ENCODE measurements at regions of chr7 and their contacts with region 1.

Region 1: GRCh38 chr7:118183786-118184564 is at the start of gene LSM8:
- DNase-seq: peak; percentile 94
- ATAC-seq: peak; percentile 95
- H3K4me3 Mint-ChIP-seq: peak within 1 kb of the TSS; percentile 97
- H3K27ac Mint-ChIP-seq: peak within 1 kb of the TSS; percentile 98
- H3K4me1 Mint-ChIP-seq: peaks cover 59% of the 10 kb centered on the region
- H3K27me3 Mint-ChIP-seq: no peaks in the 10 kb centered on the region
- CTCF ChIP-seq: no peak
- total RNA-seq, gene LSM8: 50.9 and 52.3 TPM in 2 replicates

Region 2: DNA sequence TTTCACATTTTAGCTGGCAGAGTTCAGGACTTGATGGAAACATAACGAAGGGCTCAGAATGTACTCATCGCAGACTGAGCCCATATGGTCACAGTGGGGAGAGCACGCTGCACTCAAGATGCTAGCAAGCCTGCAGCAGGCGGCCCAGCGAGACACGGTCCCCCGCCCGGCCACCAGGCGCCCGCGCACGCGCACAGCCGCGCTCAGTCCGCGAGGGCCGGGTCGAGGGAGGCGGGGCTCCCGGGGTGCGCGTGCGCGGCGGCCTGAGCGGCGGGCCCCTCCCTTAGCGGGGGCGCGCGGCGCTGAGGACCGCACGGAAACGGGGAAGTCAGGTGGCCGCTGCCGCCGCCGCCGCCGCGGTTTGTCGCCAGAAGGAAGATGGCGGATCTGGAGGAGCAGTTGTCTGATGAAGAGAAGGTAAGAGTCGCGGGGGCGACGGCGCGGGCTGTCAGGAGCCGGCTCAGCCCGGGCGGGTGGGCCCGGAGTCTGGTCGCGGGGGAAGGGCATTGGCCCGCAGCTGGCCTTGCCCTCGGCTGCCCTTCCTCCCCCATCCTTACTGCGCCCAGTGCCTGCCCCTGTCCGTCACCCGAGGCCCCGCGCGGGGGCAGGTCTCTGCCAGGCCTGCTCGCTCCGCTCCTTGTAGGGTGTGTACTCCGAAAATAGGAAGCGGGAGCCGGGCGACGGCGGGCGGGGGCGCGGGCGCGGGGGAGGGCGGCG is 1321.6 kb before region 1 on chr7 and contains the start of gene CAPZA2:
- CTCF ChIA-PET with region 1: no interaction called
- POLR2A ChIA-PET with region 1: no interaction called
- intact Hi-C with region 1: loop called (anchors 1 kb)
- DNase-seq: peak; percentile 98
- ATAC-seq: peak; percentile 87
- H3K4me3 Mint-ChIP-seq: peak within 1 kb of the TSS; percentile 98
- H3K27ac Mint-ChIP-seq: peak within 1 kb of the TSS; percentile 93
- H3K4me1 Mint-ChIP-seq: peaks cover 39% of the 10 kb centered on the region
- H3K27me3 Mint-ChIP-seq: peaks cover 5% of the 10 kb centered on the region
- CTCF ChIP-seq: no peak
- total RNA-seq, gene CAPZA2: 101 and 110 TPM in 2 replicates

Region 3: DNA sequence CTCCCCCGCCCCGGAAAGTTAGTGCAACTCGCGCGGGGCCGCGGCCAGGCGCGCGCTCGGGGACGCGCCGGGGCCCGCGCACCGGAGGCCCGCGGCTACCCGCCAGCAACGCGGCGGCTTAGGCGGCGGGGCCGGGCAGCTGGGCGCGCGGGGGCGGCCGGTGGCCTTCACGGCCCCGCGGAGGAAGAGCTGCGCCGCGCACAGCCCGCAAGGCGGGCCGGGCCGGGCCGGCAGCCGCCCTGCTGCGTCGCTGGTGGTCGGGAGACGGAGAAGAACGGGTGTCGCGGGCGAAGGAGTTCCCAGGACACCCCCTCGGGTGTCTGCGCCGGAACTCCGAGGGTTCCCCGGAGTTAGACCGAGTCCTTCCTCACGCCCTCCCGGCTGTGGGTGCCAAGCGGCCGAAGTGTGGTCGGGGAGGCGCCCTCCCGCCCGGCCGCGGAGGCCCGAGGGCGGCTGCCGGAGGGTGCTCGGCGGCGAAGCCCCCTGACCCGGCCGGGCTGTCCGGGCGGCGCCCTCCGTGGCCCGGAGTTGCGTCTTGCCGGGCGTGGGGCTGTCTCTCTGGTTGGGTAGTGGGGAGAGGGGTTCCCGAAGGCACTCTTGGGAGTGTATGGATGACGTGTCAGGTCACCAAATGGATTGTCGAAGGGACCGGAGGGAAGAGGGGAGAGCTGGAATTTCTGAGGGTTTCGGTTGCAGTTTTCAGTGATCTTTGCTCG is 1230.1 kb before region 1 on chr7:
- CTCF ChIA-PET with region 1: no interaction called
- POLR2A ChIA-PET with region 1: no interaction called
- intact Hi-C with region 1: loop called (anchors 5 kb)
- DNase-seq: peak; percentile 60
- ATAC-seq: peak; percentile 59
- H3K4me3 Mint-ChIP-seq: peak overlapping the region; percentile 93
- H3K27ac Mint-ChIP-seq: peak overlapping the region; percentile 86
- H3K4me1 Mint-ChIP-seq: peaks cover 27% of the 10 kb centered on the region
- H3K27me3 Mint-ChIP-seq: no peaks in the 10 kb centered on the region
- CTCF ChIP-seq: no peak

Region 4: GRCh38 chr7:117119192-117119924 is 1064.6 kb before region 1 on chr7:
- CTCF ChIA-PET with region 1: no interaction called
- POLR2A ChIA-PET with region 1: no interaction called
- intact Hi-C with region 1: loop called (anchors 10 kb)
- DNase-seq: peak; percentile 41
- ATAC-seq: no peak
- H3K4me3 Mint-ChIP-seq: no peak overlapping the region
- H3K27ac Mint-ChIP-seq: no peak overlapping the region
- H3K4me1 Mint-ChIP-seq: no peaks in the 10 kb centered on the region
- H3K27me3 Mint-ChIP-seq: no peaks in the 10 kb centered on the region
- CTCF ChIP-seq: peak; percentile 66

Region 5: GRCh38 chr7:117810642-117811512 is 373.1 kb before region 1 on chr7:
- CTCF ChIA-PET with region 1: no interaction called
- POLR2A ChIA-PET with region 1: no interaction called
- intact Hi-C with region 1: no loop called
- DNase-seq: no peak
- ATAC-seq: no peak
- H3K4me3 Mint-ChIP-seq: no peak overlapping the region
- H3K27ac Mint-ChIP-seq: no peak overlapping the region
- H3K4me1 Mint-ChIP-seq: no peaks in the 10 kb centered on the region
- H3K27me3 Mint-ChIP-seq: no peaks in the 10 kb centered on the region
- CTCF ChIP-seq: no peak

Region 6: GRCh38 chr7:118080947-118081346 is 103.0 kb before region 1 on chr7:
- CTCF ChIA-PET with region 1: no interaction called
- POLR2A ChIA-PET with region 1: no interaction called
- intact Hi-C with region 1: loop called (anchors 2 kb)
- DNase-seq: peak; percentile 20
- ATAC-seq: peak; percentile 96
- H3K4me3 Mint-ChIP-seq: no peak overlapping the region
- H3K27ac Mint-ChIP-seq: no peak overlapping the region
- H3K4me1 Mint-ChIP-seq: peaks cover 8% of the 10 kb centered on the region
- H3K27me3 Mint-ChIP-seq: peaks cover 2% of the 10 kb centered on the region
- CTCF ChIP-seq: no peak

Region 7: DNA sequence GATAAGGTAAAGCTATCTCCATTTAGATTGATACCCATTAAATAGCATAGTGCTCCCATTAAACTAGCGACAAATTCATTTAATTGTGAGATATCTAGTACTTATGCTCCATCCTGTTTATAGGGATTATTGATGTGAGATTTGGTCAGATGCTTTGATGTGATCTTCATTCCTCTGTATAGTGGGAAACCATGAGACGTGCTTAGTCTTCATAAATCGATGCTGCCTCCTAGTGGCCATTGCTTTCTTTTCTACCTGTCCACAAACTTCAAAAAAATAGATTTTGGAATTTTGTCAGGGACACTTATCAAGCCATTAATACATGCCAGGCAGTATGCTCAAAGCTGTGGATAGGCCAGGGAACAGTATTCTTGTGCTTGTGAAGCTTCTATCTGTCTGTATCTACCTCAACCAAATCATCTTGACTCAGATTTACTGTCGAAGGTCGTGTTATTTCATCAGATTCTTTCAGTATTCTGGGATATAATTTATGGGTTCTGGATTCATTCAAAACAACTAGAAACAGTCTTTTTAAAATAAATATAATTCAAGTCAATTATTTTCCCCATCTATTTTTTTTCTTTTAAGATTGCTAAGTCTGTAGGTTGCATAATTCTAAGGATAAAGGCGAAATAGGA is 12.0 kb after region 1 on chr7:
- CTCF ChIA-PET with region 1: interaction called, 5 read pairs
- POLR2A ChIA-PET with region 1: interaction called, 3 read pairs
- intact Hi-C with region 1: loop called (anchors 1 kb)
- DNase-seq: no peak
- ATAC-seq: peak; percentile 68
- H3K4me3 Mint-ChIP-seq: no peak overlapping the region
- H3K27ac Mint-ChIP-seq: no peak overlapping the region
- H3K4me1 Mint-ChIP-seq: peaks cover 2% of the 10 kb centered on the region
- H3K27me3 Mint-ChIP-seq: no peaks in the 10 kb centered on the region
- CTCF ChIP-seq: peak; percentile 90

Region 8: GRCh38 chr7:118214051-118214832 is 30.3 kb after region 1 on chr7:
- CTCF ChIA-PET with region 1: no interaction called
- POLR2A ChIA-PET with region 1: no interaction called
- intact Hi-C with region 1: loop called (anchors 1 kb)
- DNase-seq: peak; percentile 66
- ATAC-seq: peak; percentile 95
- H3K4me3 Mint-ChIP-seq: peak overlapping the region; percentile 91
- H3K27ac Mint-ChIP-seq: peak overlapping the region; percentile 80
- H3K4me1 Mint-ChIP-seq: peaks cover 13% of the 10 kb centered on the region
- H3K27me3 Mint-ChIP-seq: peaks cover 2% of the 10 kb centered on the region
- CTCF ChIP-seq: no peak